ENCODE measurements at regions of chr2 and their contacts with region 1.

Region 1: GRCh38 chr2:204325468-204325867 is 219.8 kb upstream of the PARD3B start:
- DNase-seq: peak in 6 of 10 donors; percentile 18 to 64 (median 46)
- H3K4me3 ChIP-seq: peak overlapping the region in 1 of 59 donors; percentile 9
- H3K27ac ChIP-seq: no peak overlapping the region
- H3K27me3 ChIP-seq: no peaks in the 10 kb centered on the region
- CTCF ChIP-seq: peak; percentile 71 to 99 (median 93)

Region 2: DNA sequence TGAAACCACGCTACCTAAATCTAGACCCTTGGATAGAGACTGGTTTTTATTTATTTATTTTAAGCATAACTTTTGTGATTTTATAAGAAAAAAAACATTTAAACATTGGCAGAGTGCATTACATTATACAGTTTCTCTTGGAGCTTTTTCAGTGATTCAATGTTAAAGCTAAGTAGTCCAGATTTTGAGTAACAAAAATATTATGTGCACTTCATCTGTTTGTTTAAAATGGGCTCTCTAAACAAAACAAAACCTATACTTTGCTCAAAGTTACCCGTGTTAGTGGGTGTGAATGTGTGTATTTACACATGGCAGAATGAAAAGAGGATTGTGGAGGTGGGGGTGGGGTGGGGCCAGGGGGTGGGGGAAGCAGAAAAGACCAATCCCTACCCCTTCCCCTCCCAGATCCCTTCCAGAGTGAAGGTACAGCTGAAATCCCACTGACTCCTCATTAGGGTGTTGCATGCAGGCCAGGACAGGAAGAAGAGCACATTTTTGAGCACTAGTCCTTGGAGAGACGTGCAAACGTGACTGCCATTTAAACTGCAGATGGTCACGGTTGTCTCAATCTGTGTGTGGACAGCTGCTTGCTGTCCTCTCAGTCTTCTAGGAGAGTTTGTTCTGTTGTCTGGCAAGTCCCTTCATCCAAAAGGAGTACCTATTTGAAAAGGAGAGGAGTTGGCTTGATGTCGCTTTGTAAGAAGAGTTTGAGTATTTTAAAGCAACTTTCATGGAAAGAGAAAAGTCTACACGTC is 85.9 kb before region 1 on chr2:
- intact Hi-C with region 1: no loop called
- DNase-seq: no peak
- H3K4me3 ChIP-seq: no peak overlapping the region
- H3K27ac ChIP-seq: no peak overlapping the region
- H3K27me3 ChIP-seq: peaks cover 0 to 10% (median 0%) of the 10 kb centered on the region in 45 donors
- CTCF ChIP-seq: no peak

Region 3: DNA sequence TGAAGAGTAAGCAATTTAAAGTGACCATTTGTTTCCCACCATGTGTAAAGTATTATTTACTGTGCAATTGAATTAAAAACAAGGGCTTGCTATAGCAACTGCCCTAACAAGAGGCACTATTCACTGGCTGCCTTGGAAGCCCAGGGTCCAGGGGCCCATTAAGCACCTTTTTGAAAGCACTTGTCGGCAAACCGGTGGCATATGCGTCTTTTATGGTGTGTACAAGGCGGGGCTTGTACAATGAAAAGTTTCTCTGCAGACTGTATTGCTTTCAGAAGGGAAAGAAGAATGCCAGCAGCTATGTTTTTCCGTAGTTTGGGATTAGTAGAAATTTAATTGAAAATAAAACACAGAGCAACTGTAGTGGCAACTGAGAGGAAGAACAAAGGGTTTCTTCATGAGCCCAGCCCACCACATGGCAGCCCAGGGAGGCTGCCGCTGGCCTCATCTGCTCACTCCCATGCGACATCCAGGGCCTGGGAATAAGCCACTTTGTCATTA is 59.7 kb before region 1 on chr2:
- intact Hi-C with region 1: loop called in 1 of 2 experiments (anchors 2 kb)
- DNase-seq: peak in 5 of 10 donors; percentile 45 to 61 (median 60)
- H3K4me3 ChIP-seq: peak overlapping the region in 20 of 59 donors; percentile 1 to 54 (median 16)
- H3K27ac ChIP-seq: peak overlapping the region in 53 of 59 donors; percentile 1 to 92 (median 73)
- H3K27me3 ChIP-seq: no peaks in the 10 kb centered on the region
- CTCF ChIP-seq: peak in 2 of 56 donors; percentile 15 to 32

Region 4: DNA sequence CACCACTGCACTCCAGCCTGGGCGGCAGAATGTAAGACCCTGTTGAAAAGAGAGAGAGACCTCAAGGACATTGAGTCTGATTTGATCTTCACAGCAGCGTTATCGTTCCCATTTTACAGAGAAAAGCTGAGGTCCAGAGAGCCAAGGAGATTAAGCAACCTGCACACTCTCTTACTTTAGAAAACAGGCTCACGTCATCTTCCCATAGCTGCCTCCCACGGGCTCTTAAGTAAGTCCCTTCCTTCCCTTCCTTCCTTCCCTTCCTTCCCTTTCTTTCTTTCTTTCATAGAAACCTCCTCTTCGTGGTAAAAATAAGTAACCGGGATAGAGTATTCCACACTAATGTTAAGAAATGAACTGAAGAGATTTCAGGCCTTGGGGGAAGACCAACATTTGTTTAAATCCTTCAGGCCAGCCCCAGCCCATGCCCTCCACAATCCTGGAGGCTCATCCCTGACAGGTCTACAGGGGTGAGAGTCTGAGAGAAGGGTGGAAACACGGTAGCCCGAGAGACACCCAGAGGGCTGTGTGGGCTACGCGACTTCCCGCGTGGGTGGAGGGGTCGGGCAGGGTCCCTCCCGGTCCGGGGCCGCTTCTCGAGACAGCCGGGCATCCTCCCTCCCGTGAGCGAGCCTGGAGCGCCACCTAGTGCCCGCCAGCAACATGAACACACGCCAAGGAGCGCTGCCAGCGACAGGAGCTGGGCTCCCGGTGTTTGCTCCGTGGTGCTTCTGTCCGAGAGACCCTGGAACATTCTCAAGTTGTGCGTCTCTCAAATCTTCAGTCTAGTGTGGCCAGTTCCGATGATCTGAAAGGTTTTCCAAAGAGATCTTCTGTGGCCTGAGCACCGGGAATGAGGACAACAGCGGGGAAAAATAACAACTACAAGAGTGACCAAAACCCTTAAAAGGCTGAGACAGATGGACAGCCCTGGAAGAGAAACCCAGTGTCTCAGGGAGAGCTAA is 1600.2 kb after region 1 on chr2:
- intact Hi-C with region 1: loop called in 1 of 2 experiments (anchors 10 kb)
- DNase-seq: peak; percentile 44 to 84 (median 58)
- H3K4me3 ChIP-seq: peak overlapping the region in 41 of 59 donors; percentile 4 to 52 (median 28)
- H3K27ac ChIP-seq: no peak overlapping the region
- H3K27me3 ChIP-seq: peaks cover 0 to 35% (median 12%) of the 10 kb centered on the region in 45 donors
- CTCF ChIP-seq: peak; percentile 61 to 98 (median 90)

Measured in dorsolateral prefrontal cortex (tissue), 120 donors.